ENCODE measurements at regions of chr3 and their contacts with region 1.

Region 1: DNA sequence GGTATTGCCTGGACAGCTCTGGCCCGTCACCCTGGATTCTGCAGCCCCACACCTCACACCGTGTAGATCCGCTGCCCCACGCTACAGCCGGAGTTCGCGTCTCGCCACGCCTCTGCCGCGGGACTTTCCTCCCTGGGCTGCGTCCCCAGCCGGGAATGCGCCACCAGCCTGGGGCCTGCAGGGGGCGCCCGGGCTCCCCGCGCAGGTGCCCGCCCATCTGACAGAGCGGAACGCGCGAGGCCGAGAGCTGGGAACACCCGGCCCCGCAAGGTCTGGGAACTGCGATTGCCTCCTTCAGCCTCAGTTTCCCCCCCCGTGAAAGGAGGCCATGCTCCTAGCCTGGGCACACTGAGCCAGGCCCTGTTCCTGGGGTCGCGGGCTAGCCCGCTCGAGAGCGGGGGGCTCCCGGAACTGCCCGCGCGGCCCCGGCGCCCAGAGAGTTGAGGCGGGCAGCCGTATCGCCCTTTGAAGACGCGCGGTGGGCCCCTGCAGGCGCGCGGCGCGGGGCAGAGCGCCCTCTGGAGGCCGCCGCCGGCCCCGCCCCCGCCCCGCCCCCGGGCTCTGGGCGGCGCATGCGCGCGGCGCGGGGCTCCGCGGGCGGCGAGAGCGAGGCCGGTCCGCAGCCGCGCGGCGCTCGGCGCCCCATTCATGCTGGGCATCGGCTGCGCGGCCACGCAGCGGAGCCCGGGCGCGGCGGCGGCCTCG is at the start of gene PLXNA1:
- DNase-seq: peak; percentile 66
- ATAC-seq: peak; percentile 79
- H3K4me3 ChIP-seq: peak within 1 kb of the TSS; percentile 67
- H3K27ac ChIP-seq: peak within 1 kb of the TSS; percentile 72
- H3K4me1 ChIP-seq: peaks cover 14% of the 10 kb centered on the region; the same call in 1 of the 2 replicates
- H3K27me3 ChIP-seq: no peaks in the 10 kb centered on the region; the same call in 1 of the 2 replicates
- CTCF ChIP-seq: peak; percentile 91
- POLR2A ChIP-seq: peak; percentile 55; the same call in 1 of the 2 replicates
- RAD21 ChIP-seq: peak; percentile 48
- total RNA-seq, gene PLXNA1: 13.6 and 14.4 TPM in 2 replicates

Region 2: GRCh38 chr3:126522363-126522788 is 460.2 kb before region 1 on chr3:
- CTCF ChIA-PET with region 1: no interaction called
- POLR2A ChIA-PET with region 1: no interaction called
- dilution Hi-C with region 1: no loop called
- in situ Hi-C with region 1: no loop called
- intact Hi-C with region 1: loop called (anchors 5 kb)
- DNase-seq: peak; percentile 33
- ATAC-seq: peak; percentile 72
- H3K4me3 ChIP-seq: no peak overlapping the region
- H3K27ac ChIP-seq: no peak overlapping the region
- H3K4me1 ChIP-seq: no peaks in the 10 kb centered on the region; the same call in 1 of the 2 replicates
- H3K27me3 ChIP-seq: peaks cover 45% of the 10 kb centered on the region
- CTCF ChIP-seq: peak; percentile 78
- POLR2A ChIP-seq: no peak
- RAD21 ChIP-seq: peak; percentile 78

Region 3: GRCh38 chr3:126792998-126793397 is 189.6 kb before region 1 on chr3:
- CTCF ChIA-PET with region 1: no interaction called
- POLR2A ChIA-PET with region 1: no interaction called
- dilution Hi-C with region 1: no loop called
- in situ Hi-C with region 1: no loop called
- intact Hi-C with region 1: no loop called
- DNase-seq: no peak
- ATAC-seq: no peak
- H3K4me3 ChIP-seq: no peak overlapping the region
- H3K27ac ChIP-seq: no peak overlapping the region
- H3K4me1 ChIP-seq: no peaks in the 10 kb centered on the region
- H3K27me3 ChIP-seq: no peaks in the 10 kb centered on the region
- CTCF ChIP-seq: no peak
- POLR2A ChIP-seq: no peak
- RAD21 ChIP-seq: no peak

Region 4: DNA sequence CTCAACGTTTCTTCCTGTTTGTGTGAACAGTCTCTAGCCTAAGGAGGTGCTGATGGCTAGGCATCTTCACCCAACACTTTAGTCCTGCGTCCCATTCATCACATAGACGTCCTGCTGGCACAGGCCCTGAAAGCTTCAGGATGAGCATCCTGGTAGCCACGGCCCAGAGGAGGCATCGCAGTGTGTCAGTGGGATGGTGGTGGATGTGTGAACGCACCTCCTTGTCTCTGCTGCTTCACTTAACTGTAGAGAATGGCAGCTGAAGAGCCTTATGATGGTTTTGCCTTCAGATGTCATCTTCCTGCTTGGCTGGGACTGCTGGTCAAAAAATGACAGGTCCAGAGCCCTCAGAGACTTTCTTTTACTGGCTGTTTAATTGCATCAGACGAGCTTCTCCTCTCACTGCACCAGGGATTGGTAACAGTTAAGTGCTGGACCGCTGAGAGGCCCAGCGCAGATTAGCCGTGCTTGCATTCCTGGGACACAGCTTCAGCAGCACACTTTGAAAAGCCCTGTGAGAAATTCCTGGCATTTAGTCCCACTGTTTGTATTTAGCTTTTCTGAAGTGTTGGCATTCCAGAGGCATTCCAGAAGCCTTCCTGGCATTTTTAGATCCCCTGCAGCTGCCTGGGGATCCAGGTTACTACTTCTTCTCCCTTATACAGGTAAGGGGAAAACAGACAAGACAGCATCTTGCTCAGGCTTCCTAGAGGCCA is 132.1 kb before region 1 on chr3:
- CTCF ChIA-PET with region 1: no interaction called
- POLR2A ChIA-PET with region 1: no interaction called
- dilution Hi-C with region 1: no loop called
- in situ Hi-C with region 1: no loop called
- intact Hi-C with region 1: loop called (anchors 5 kb)
- DNase-seq: peak; percentile 78
- ATAC-seq: peak; percentile 97
- H3K4me3 ChIP-seq: no peak overlapping the region
- H3K27ac ChIP-seq: peak overlapping the region; percentile 79
- H3K4me1 ChIP-seq: peaks cover 15% of the 10 kb centered on the region
- H3K27me3 ChIP-seq: no peaks in the 10 kb centered on the region
- CTCF ChIP-seq: no peak
- POLR2A ChIP-seq: no peak
- RAD21 ChIP-seq: no peak

Region 5: DNA sequence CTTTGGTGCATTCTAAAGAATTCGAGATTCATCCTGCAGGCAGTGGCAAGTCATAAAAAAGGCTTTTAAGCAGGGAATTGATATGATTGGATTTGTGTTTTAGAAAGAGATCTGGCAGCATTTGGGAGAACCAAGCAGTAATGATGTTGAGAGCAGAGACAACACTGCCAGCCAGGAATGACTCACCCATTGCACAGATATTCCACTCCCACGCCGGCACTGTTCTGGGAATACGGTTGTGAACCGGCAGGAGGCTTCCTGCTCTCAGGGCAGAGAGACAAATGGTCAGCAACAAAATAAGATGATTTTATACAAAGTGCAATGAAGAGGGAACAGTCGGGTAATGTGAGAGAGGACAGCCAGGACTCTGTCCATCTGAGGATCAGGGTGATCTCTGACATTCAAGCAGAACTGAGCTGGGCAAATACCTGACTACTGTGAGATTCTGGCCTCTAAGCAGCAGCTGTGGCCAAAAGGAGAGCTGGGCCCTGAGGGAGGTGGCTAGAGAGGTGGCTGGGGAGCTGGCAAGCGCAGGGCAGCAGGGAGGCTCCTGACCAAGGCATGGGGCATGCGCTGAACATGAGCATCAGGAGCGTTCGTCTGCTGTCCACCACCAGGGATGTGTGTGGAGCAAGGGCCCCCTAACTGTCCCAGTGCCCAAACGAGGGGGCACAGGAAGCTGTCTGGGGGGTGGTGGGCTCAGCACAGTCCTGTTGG is 55.8 kb before region 1 on chr3:
- CTCF ChIA-PET with region 1: no interaction called
- POLR2A ChIA-PET with region 1: no interaction called
- dilution Hi-C with region 1: no loop called
- in situ Hi-C with region 1: no loop called
- intact Hi-C with region 1: no loop called
- DNase-seq: peak; percentile 89
- ATAC-seq: peak; percentile 90
- H3K4me3 ChIP-seq: no peak overlapping the region
- H3K27ac ChIP-seq: peak overlapping the region; percentile 25
- H3K4me1 ChIP-seq: peaks cover 26% of the 10 kb centered on the region
- H3K27me3 ChIP-seq: no peaks in the 10 kb centered on the region
- CTCF ChIP-seq: peak; percentile 54
- POLR2A ChIP-seq: no peak
- RAD21 ChIP-seq: peak; percentile 59

Region 6: GRCh38 chr3:127002195-127003174 is 19.9 kb after region 1 on chr3:
- CTCF ChIA-PET with region 1: no interaction called
- POLR2A ChIA-PET with region 1: no interaction called
- dilution Hi-C with region 1: no loop called
- in situ Hi-C with region 1: no loop called
- intact Hi-C with region 1: loop called (anchors 1 kb)
- DNase-seq: peak; percentile 89
- ATAC-seq: peak; percentile 92
- H3K4me3 ChIP-seq: no peak overlapping the region
- H3K27ac ChIP-seq: peak overlapping the region; percentile 99
- H3K4me1 ChIP-seq: peaks cover 29% of the 10 kb centered on the region
- H3K27me3 ChIP-seq: no peaks in the 10 kb centered on the region
- CTCF ChIP-seq: peak; percentile 69
- POLR2A ChIP-seq: 0 out of 2 replicates have a peak, but pooled peaks have one; percentile 49
- RAD21 ChIP-seq: peak; percentile 70

Region 7: DNA sequence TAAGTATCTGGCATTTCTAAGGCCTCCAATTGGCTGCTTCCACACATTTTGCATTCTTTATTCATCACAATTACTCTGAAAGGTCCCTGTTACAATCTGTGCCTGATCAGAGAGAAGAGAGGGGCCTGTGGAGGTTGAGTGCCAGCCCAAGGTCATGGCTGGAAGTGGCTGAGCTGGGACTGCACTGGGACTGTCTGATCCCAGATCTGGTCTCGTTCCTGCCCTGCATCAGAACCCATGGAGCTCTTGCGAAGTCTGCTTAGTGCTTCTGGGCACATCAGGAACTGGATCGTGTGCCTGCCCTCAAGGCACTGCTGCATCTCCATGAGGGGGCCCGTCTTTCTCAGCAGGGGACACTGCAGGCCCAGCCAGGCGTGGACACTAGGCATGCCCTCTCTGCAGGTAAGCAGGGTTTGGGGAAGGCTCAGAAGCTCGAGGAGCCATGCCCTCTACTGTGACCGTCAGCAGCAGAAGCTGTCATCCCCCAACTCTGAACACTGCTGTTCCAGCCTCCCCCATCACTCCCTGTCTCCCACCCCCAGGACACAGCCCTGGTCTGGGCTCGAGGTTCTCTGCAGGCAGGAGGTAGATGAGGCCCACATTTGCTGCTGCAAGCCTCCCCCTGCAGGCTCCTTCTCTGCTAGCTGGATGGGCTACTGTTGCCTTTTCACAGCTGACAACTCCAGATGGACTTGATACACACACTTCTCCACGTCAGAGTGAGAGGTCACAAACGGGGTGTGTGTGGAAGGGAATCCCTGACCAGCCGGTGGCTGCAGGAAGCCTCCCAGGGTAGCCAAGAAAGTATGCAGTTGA is 113.8 kb after region 1 on chr3:
- CTCF ChIA-PET with region 1: no interaction called
- POLR2A ChIA-PET with region 1: no interaction called
- dilution Hi-C with region 1: no loop called
- in situ Hi-C with region 1: no loop called
- intact Hi-C with region 1: no loop called
- DNase-seq: peak; percentile 3
- ATAC-seq: no peak
- H3K4me3 ChIP-seq: no peak overlapping the region
- H3K27ac ChIP-seq: no peak overlapping the region
- H3K4me1 ChIP-seq: no peaks in the 10 kb centered on the region
- H3K27me3 ChIP-seq: peaks cover 36% of the 10 kb centered on the region
- CTCF ChIP-seq: no peak
- POLR2A ChIP-seq: no peak
- RAD21 ChIP-seq: no peak

Region 8: DNA sequence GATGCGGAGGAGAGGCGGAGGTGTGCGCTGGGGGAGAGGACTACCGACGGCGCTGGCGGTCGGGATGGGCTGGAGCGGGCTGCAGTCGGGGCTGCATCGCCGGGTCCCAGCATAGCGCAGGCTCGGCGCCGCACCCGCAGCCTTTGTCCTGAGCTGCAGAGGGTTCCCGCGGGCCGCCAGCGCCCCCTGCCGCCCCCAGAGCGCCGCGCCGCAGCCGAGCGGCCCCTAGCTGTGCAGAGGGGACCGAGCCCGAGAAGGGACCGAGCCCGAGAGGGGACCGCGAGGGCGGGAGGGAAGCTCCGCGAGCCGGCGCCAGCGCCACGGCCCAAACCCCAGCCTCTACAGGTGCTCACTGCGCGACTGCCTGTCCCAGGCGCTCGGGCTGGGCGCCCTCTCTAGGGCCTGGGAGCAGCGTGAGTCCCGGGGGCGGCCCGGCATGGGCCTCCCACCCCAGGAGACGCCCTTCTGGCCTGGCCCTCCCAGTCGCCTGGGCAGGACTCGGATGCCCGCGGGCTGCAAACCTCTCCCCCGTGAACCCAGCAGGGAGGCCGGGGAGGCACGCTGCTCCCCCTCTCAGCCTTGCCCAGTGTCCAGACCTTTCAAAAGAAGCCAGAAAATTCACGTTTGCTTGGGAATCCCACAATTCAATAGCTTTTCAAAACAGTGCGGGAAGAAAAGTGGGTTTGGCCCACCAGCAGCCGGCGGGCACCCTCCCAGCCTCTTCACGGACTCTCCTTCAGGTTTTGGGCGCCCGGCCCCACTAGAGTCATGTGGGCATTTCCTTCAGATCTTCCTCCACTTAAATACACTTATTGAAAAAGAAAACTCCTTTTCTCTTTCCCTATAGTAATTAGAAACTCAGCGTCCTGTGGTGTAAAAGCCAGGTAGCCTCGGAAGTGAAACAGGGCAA is 473.2 kb after region 1 on chr3:
- CTCF ChIA-PET with region 1: no interaction called
- POLR2A ChIA-PET with region 1: no interaction called
- dilution Hi-C with region 1: no loop called
- in situ Hi-C with region 1: no loop called
- intact Hi-C with region 1: loop called (anchors 10 kb)
- DNase-seq: peak; percentile 29
- ATAC-seq: peak; percentile 98
- H3K4me3 ChIP-seq: no peak overlapping the region
- H3K27ac ChIP-seq: no peak overlapping the region
- H3K4me1 ChIP-seq: no peaks in the 10 kb centered on the region
- H3K27me3 ChIP-seq: peaks cover 30% of the 10 kb centered on the region
- CTCF ChIP-seq: peak; percentile 97
- POLR2A ChIP-seq: no peak
- RAD21 ChIP-seq: peak; percentile 87